ENCODE measurements at regions of chr1 and their contacts with region 1.

Region 1: DNA sequence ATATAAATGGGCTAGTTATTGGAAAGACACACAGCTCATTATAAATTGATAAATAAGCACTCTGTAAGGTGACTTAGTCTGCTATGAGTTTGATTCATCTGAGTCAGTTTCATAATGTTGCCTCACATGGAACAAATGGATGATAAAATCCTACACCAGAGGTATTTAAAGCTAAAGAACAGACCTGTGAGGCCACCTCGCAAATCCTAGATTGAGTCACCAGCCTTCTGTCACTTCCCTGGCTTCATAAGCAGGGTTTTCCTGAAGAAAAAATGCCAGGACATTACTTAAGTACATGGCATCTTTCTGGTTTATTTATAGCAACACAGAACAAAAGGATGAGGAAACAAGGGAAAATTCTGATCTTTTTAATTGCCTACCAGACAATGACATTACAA is 18.4 kb downstream of the CD2 start:
- DNase-seq: no peak

Region 2: DNA sequence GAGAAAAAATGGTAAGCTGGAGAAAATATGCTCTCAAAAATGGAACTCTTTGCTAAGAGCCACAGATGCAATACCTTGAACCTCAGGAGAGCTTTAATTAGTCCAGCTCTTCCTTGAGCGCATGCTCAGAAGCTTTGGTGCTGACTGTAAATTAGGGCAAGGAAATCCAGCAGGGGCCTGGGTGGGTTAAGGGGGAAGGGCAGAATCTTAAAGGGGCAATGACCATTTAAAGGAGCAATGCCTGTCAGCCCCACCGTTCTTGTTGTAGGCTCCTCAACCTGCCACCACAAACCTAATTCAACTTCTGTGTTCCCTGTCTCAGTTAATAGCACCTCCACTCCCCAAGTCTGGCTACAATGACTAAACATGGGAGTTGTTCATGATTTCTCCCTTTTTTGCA is 803.1 kb before region 1 on chr1:
- intact Hi-C with region 1: loop called in 1 of 2 experiments (anchors 5 kb)
- DNase-seq: no peak

Region 3: GRCh38 chr1:117301901-117302300 is 529.3 kb after region 1 on chr1:
- intact Hi-C with region 1: no loop called
- DNase-seq: no peak

Region 4: DNA sequence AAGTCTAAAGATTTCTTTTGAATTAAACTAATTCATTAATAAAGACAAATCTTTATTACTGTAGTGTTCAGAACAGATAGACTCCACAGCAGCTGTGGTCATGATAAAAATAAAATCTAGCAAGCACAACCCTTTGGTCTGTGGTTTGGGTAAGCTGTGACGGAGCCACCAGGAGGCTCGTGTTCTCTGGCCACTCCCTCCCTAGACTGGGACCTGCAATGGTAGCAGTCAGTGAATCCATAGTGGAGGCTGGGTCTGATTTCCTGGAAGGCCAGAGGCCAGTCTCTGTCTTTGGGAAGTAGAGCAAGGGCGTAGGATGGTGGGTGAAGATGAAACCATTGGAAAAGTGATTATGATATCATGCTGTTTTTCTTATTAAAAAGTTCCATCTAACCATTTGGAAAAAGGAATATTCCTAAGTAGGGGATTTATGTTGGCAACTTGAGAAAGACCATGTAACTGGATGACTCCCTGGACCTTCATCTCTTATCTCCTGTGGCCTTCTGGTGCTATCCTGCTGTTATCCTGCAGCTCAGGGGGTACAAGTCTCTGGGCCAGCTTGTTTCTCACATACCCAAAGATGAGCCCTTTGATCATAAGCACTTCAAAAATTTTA is 872.2 kb after region 1 on chr1:
- intact Hi-C with region 1: no loop called
- DNase-seq: peak; percentile 16

Measured in posterior vena cava (tissue), 2 donors.